Activated naive CD4-positive, alpha-beta T cell treated with anti-CD3 and anti-CD28 coated beads for 36 hours (primary cell): ENCODE measurements at regions of chr4 and their contacts with region 1.

Region 1: GRCh38 chr4:156968479-156968984 is 3.1 kb downstream of the PDGFC start:
- DNase-seq: peak; percentile 52
- H3K4me3 Mint-ChIP-seq: no peak overlapping the region
- H3K27ac Mint-ChIP-seq: no peak overlapping the region
- H3K4me1 Mint-ChIP-seq: peaks cover 12% of the 10 kb centered on the region
- H3K27me3 Mint-ChIP-seq: peaks cover 57% of the 10 kb centered on the region

Region 2: DNA sequence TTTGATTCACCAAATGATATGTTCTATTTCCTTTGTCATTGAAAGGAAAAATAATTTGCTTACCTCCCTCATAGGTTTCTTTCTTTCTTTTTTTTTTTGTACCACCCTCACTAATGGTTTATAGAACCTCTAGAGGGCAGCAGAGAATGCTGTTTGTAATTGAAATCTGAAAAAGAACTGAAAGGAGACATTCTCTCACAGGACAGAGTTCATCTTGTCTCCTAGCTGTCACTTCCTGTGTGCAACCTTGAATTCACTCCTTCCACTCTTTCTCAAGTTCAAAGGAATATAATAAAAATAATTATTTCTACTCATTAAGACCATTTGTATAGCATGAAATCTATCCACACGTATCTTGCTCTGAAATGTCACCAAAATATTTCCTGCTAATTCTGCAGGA is 1158.7 kb before region 1 on chr4:
- CTCF ChIA-PET with region 1: no interaction called
- intact Hi-C with region 1: loop called (anchors 5 kb)
- DNase-seq: peak; percentile 29
- H3K4me3 Mint-ChIP-seq: no peak overlapping the region
- H3K27ac Mint-ChIP-seq: no peak overlapping the region
- H3K4me1 Mint-ChIP-seq: no peaks in the 10 kb centered on the region
- H3K27me3 Mint-ChIP-seq: no peaks in the 10 kb centered on the region

Region 3: GRCh38 chr4:156109949-156110900 is 858.3 kb before region 1 on chr4:
- CTCF ChIA-PET with region 1: no interaction called
- intact Hi-C with region 1: loop called (anchors 5 kb)
- DNase-seq: no peak
- H3K4me3 Mint-ChIP-seq: no peak overlapping the region
- H3K27ac Mint-ChIP-seq: no peak overlapping the region
- H3K4me1 Mint-ChIP-seq: no peaks in the 10 kb centered on the region
- H3K27me3 Mint-ChIP-seq: no peaks in the 10 kb centered on the region